ENCODE measurements at regions of chr1 and their contacts with region 1.

Region 1: DNA sequence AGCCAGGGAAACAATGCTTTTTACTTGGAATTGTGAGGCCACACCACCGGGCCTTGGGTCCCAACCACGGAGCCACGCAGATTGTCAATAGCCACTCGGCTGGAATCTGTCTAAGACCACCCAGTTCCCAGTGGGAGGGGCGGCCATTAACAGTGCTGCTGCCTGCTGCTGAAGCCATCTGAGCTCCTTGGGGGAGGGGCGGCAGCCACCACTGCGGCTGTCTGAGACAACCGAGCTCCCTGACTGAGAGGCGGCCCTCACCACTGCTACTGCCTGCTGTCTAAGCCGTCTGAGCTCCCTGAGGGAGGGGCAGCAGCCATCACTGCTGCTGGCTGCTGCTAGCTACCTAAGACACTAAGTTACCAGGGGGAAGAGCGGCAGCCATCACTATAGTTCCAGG is 64.3 kb downstream of the DMRTA2 start:
- DNase-seq: no peak
- ATAC-seq: no peak
- H3K4me3 ChIP-seq: no peak overlapping the region
- H3K4me3 Mint-ChIP-seq: no peak overlapping the region
- H3K27ac ChIP-seq: no peak overlapping the region
- H3K27ac Mint-ChIP-seq: no peak overlapping the region
- H3K4me1 ChIP-seq: no peaks in the 10 kb centered on the region
- H3K4me1 Mint-ChIP-seq: no peaks in the 10 kb centered on the region
- H3K27me3 ChIP-seq: peaks cover 19 to 20% of the 10 kb centered on the region in 2 experiments
- H3K27me3 Mint-ChIP-seq: peaks cover 72% of the 10 kb centered on the region
- CTCF ChIP-seq: no peak

Region 2: DNA sequence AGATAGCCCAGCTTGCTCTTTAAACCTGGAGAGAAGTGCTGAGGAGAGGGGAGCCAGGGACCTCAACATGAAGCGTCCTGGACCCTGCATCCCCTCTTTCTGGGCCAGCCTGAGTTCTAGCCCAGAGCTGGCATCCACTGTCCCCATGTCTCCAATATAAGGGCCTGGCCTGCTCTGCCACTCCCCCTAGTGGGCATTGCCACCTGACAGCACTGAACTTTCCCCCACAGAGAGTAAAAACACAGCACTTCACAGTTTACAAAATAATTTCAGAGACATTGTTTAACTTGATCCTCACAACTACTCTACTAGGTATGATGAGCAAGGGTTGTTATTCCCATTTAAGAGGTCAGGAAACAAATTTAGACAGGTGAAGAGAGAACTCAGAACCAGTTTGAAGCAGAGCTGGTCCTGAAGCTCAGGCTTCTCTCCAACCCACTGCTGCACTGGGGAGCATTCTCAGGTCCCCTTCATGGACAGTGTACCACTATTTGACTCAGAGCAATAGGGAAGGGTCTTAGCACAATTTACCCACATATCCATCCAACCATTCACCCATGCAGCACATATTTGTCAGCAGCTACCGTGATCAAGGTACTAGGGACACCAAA is 86.9 kb before region 1 on chr1:
- CTCF ChIA-PET with region 1: no interaction called
- POLR2A ChIA-PET with region 1: no interaction called
- intact Hi-C with region 1: no loop called
- DNase-seq: peak in 2 of 14 experiments; percentile 6 to 8
- ATAC-seq: no peak
- H3K4me3 ChIP-seq: no peak overlapping the region
- H3K4me3 Mint-ChIP-seq: no peak overlapping the region
- H3K27ac ChIP-seq: no peak overlapping the region
- H3K27ac Mint-ChIP-seq: no peak overlapping the region
- H3K4me1 ChIP-seq: no peaks in the 10 kb centered on the region
- H3K4me1 Mint-ChIP-seq: no peaks in the 10 kb centered on the region
- H3K27me3 ChIP-seq: peaks cover 2 to 4% of the 10 kb centered on the region in 2 experiments
- H3K27me3 Mint-ChIP-seq: peaks cover 28% of the 10 kb centered on the region
- CTCF ChIP-seq: no peak

Region 3: GRCh38 chr1:50343323-50343722 is 15.6 kb before region 1 on chr1:
- CTCF ChIA-PET with region 1: no interaction called
- POLR2A ChIA-PET with region 1: no interaction called
- intact Hi-C with region 1: loop called in 1 of 2 experiments (anchors 1 kb)
- DNase-seq: no peak
- ATAC-seq: no peak
- H3K4me3 ChIP-seq: no peak overlapping the region
- H3K4me3 Mint-ChIP-seq: no peak overlapping the region
- H3K27ac ChIP-seq: no peak overlapping the region
- H3K27ac Mint-ChIP-seq: no peak overlapping the region
- H3K4me1 ChIP-seq: no peaks in the 10 kb centered on the region
- H3K4me1 Mint-ChIP-seq: no peaks in the 10 kb centered on the region
- H3K27me3 ChIP-seq: peaks cover 7 to 8% of the 10 kb centered on the region in 2 experiments
- H3K27me3 Mint-ChIP-seq: peaks cover 45% of the 10 kb centered on the region
- CTCF ChIP-seq: no peak

Measured in CD4-positive, alpha-beta T cell (primary cell).